H1 (cell line): ENCODE measurements at regions of chr2 and their contacts with region 1.

Region 1: DNA sequence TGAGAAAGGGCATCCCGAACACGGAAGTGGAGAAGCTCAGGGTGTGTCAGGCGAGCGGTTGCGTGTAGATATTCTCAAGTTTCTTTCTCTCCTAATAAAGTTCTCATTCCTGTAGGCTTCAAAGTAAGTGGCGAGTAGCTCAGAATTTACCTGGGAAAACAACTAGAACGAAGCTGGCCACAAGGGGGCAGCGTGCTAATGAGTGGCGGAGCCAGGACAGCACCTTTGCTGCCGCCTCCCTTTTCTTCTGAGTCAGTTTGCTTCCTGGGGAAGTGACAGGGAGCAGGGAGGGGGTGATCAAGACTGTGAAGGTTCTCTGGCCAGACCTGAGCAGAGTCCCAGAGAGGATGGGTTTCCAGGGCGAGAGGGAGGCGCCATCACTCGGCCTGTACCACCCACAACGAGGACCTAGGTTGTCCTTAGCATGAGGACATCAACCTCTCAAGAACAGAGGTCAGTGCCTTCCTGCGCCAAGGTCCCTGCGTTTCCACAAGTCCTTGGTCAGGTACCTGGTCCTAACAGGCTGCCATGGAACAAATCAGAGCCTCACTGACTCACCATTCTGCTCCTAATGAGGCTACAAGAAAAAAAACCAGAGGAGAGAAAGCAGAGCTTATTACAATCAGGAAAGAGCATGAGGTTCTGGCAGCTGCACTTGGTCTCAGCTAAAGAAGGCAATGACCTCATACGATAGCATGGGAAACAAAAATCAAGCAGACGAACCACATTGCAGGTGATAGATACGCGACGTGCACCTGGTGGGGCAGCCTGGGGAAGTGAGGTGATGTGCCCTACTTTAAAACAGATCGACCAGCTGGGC is 98.6 kb downstream of the PLB1 start:
- DNase-seq: peak; percentile 70 to 95
- H3K4me3 ChIP-seq: no peak overlapping the region
- H3K27ac ChIP-seq: no peak overlapping the region
- H3K4me1 ChIP-seq: peaks cover 0 to 10% (median 3%) of the 10 kb centered on the region in 4 experiments; a peak in 5 of 7 replicates
- H3K27me3 ChIP-seq: no peaks in the 10 kb centered on the region
- CTCF ChIP-seq: peak; percentile 80 to 84 (median 83)
- EP300 ChIP-seq: no peak
- POLR2A ChIP-seq: no peak
- RAD21 ChIP-seq: peak; percentile 86 to 88

Region 2: GRCh38 chr2:28510184-28510583 is 84.3 kb before region 1 on chr2:
- CTCF ChIA-PET with region 1: no interaction called
- POLR2A ChIA-PET with region 1: no interaction called
- DNase-seq: no peak
- H3K4me3 ChIP-seq: no peak overlapping the region
- H3K27ac ChIP-seq: no peak overlapping the region
- H3K4me1 ChIP-seq: no peaks in the 10 kb centered on the region
- H3K27me3 ChIP-seq: no peaks in the 10 kb centered on the region
- CTCF ChIP-seq: no peak
- EP300 ChIP-seq: no peak
- POLR2A ChIP-seq: no peak
- RAD21 ChIP-seq: no peak

Region 3: GRCh38 chr2:28533044-28533680 is 61.3 kb before region 1 on chr2:
- CTCF ChIA-PET with region 1: no interaction called
- POLR2A ChIA-PET with region 1: no interaction called
- DNase-seq: no peak
- H3K4me3 ChIP-seq: no peak overlapping the region
- H3K27ac ChIP-seq: no peak overlapping the region
- H3K4me1 ChIP-seq: no peaks in the 10 kb centered on the region
- H3K27me3 ChIP-seq: no peaks in the 10 kb centered on the region; a peak in 1 of 7 replicates
- CTCF ChIP-seq: no peak
- EP300 ChIP-seq: no peak
- POLR2A ChIP-seq: no peak
- RAD21 ChIP-seq: no peak

Region 4: GRCh38 chr2:28577791-28578680 is 16.5 kb before region 1 on chr2:
- CTCF ChIA-PET with region 1: interaction called, 28 read pairs
- POLR2A ChIA-PET with region 1: no interaction called
- DNase-seq: no peak
- H3K4me3 ChIP-seq: no peak overlapping the region
- H3K27ac ChIP-seq: no peak overlapping the region
- H3K4me1 ChIP-seq: no peaks in the 10 kb centered on the region; a peak in 1 of 7 replicates
- H3K27me3 ChIP-seq: no peaks in the 10 kb centered on the region
- CTCF ChIP-seq: no peak
- EP300 ChIP-seq: no peak
- POLR2A ChIP-seq: no peak
- RAD21 ChIP-seq: no peak

Region 5: DNA sequence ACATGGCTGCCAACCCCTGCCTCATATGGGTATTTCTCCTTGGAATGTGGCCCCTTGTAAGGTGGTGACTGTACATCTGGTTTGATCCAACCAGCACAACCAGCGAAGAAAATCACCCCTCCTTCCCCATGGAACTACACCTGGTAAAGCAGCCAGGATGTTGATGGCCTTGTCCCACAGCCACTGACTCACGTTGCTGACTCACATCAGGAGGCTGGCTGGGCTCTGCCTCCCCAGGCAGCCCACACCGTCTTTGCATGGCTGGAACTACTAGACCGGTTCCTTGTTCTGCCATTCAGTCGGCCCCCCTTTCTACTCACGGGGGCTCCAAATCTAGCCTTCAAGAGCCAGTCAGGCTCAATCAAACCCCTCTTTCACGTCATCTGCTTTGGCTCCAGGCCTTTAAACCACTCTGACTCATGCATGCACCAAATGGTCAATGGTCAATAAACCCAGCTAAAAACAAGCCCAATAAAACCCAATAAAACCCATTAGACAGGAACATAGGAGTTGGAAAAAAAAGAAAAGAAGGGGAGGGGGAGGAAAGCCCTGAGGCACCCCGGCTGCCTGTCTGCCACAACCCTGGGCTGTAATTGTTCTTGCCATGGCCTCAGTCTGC is 16.2 kb after region 1 on chr2:
- CTCF ChIA-PET with region 1: interaction called, 81 read pairs
- POLR2A ChIA-PET with region 1: interaction called, 4 read pairs
- DNase-seq: no peak
- H3K4me3 ChIP-seq: no peak overlapping the region
- H3K27ac ChIP-seq: no peak overlapping the region
- H3K4me1 ChIP-seq: peaks cover 0 to 7% (median 3%) of the 10 kb centered on the region in 4 experiments; a peak in 4 of 7 replicates
- H3K27me3 ChIP-seq: no peaks in the 10 kb centered on the region; a peak in 1 of 7 replicates
- CTCF ChIP-seq: no peak
- EP300 ChIP-seq: no peak
- POLR2A ChIP-seq: no peak
- RAD21 ChIP-seq: no peak

Region 6: GRCh38 chr2:28751252-28751955 is 156.9 kb after region 1 on chr2 and contains the start of gene PPP1CB:
- CTCF ChIA-PET with region 1: interaction called, 32 read pairs
- POLR2A ChIA-PET with region 1: interaction called, 13 read pairs
- DNase-seq: peak; percentile 59 to 91
- H3K4me3 ChIP-seq: peak within 1 kb of the TSS; percentile 84 to 96 (median 91)
- H3K27ac ChIP-seq: peak within 1 kb of the TSS; percentile 97
- H3K4me1 ChIP-seq: peaks cover 3 to 8% (median 4%) of the 10 kb centered on the region in 4 experiments; a peak in 5 of 7 replicates
- H3K27me3 ChIP-seq: no peaks in the 10 kb centered on the region
- CTCF ChIP-seq: peak in 2 of 3 experiments; percentile 8 to 10; a peak in 2 of 4 replicates
- EP300 ChIP-seq: 0 out of 3 replicates have a peak, but pooled peaks of 1 of the 2 experiments have one; percentile 30
- POLR2A ChIP-seq: peak in 1 of 2 experiments; percentile 80; a peak in 2 of 3 replicates
- RAD21 ChIP-seq: peak in 1 of 2 experiments; percentile 1; a peak in 1 of 4 replicates
- total RNA-seq, gene PPP1CB: 158 and 165 TPM in 2 replicates

Region 7: GRCh38 chr2:28776471-28776870 is 182.0 kb after region 1 on chr2:
- CTCF ChIA-PET with region 1: interaction called, 16 read pairs
- POLR2A ChIA-PET with region 1: no interaction called
- DNase-seq: no peak
- H3K4me3 ChIP-seq: no peak overlapping the region
- H3K27ac ChIP-seq: no peak overlapping the region
- H3K4me1 ChIP-seq: no peaks in the 10 kb centered on the region
- H3K27me3 ChIP-seq: no peaks in the 10 kb centered on the region
- CTCF ChIP-seq: no peak
- EP300 ChIP-seq: no peak
- POLR2A ChIP-seq: no peak
- RAD21 ChIP-seq: no peak